ENCODE measurements at regions of chr5 and their contacts with region 1.

Region 1: GRCh38 chr5:132466433-132467286 is 23.9 kb downstream of the IRF1 start:
- DNase-seq: peak; percentile 79
- H3K4me3 ChIP-seq: no peak overlapping the region
- H3K27ac ChIP-seq: no peak overlapping the region
- H3K4me1 ChIP-seq: peaks cover 43% of the 10 kb centered on the region
- H3K27me3 ChIP-seq: no peaks in the 10 kb centered on the region
- CTCF ChIP-seq: no peak
- POLR2A ChIP-seq: no peak

Region 2: DNA sequence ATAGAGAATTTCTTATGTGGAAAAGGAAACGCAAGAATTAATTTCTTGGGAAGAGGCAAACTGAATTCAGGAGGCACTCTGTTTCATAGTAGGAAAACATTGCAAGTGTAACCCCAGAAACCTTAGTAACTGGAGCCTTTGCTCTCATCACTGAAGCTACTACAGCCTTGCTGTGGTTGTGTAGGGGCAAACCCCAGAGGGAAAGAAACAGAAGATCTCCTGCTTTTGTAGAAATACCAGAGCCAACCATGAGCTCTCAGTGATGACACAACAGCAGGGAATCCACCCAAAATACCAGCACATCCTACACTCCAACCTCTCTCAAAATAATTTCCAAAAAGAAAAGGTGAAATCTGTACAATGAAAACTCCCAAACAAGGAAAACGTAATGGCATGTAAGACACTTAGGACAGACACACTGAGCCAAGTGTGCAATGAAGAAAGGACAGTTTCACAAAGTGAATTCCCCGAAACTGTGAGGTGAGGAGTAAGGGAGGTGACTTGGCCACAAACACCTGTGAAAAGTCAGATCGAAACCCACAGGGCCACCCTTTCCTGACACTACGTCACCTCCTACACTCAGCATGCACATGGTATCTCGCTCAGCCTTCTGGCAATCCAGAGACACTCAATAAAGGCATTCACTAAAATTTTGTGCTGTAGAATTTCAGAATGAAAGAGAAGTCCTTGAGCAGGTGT is 446.7 kb before region 1 on chr5:
- CTCF ChIA-PET with region 1: no interaction called
- POLR2A ChIA-PET with region 1: no interaction called
- dilution Hi-C with region 1: no loop called
- intact Hi-C with region 1: no loop called
- DNase-seq: no peak
- H3K4me3 ChIP-seq: no peak overlapping the region
- H3K27ac ChIP-seq: no peak overlapping the region
- H3K4me1 ChIP-seq: no peaks in the 10 kb centered on the region
- H3K27me3 ChIP-seq: peaks cover 11 to 30% of the 10 kb centered on the region in 2 experiments
- CTCF ChIP-seq: no peak
- POLR2A ChIP-seq: no peak

Region 3: DNA sequence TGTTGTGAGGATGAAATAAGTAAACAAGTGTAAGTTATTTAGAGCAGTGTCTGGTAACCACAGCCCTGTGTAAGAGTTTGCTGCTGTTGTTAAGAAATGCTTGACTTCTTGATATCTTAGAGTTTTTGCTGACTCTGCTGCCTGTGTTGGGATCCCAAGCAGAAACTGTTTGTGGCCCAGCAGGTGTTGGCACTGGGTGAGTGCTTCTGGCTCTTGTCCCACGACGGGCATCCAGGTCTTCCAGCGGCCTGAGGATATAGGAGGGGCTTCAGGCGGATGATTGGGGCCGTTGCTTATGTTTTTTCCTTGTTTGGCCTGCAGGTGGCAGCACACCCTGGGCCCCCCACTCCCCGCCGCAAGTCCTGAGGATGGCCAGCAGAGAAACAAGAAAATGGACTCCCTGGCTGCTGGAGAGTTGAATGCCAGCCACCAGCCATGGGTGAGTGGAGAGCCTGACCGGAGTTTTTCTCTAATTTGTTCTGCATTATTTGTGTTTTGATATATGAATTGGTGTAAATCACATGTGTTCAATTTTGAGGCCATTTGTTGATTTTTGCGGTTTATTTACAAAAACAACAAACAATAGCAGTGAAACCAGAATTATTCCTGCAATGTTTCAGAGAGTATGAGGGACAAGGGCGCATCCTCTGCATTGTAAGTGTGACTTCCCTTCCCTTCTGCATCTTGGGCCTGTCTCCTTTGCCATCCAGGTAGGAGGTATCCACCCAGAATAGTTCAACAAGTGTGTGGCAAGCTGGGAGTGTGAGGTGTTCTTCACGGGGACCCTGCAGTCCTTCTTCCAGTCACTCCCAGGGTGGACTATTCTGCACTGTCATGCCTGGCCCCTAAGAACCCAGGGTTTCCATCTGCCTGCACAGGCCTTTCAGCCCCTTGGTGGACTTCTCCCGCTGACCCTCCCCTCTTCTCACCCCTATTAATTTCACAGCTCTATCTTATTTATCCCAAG is 46.9 kb before region 1 on chr5:
- CTCF ChIA-PET with region 1: interaction called, 23 read pairs
- POLR2A ChIA-PET with region 1: no interaction called
- dilution Hi-C with region 1: no loop called
- intact Hi-C with region 1: loop called (anchors 1 kb)
- DNase-seq: peak; percentile 90
- H3K4me3 ChIP-seq: no peak overlapping the region
- H3K27ac ChIP-seq: peak overlapping the region; percentile 6
- H3K4me1 ChIP-seq: peaks cover 41% of the 10 kb centered on the region
- H3K27me3 ChIP-seq: no peaks in the 10 kb centered on the region
- CTCF ChIP-seq: peak; percentile 77 to 83
- POLR2A ChIP-seq: no peak

Region 4: GRCh38 chr5:132426525-132427138 is 40.0 kb before region 1 on chr5:
- CTCF ChIA-PET with region 1: interaction called, 30 read pairs
- POLR2A ChIA-PET with region 1: interaction called, 3 read pairs
- dilution Hi-C with region 1: no loop called
- intact Hi-C with region 1: loop called (anchors 2 kb)
- DNase-seq: peak; percentile 80
- H3K4me3 ChIP-seq: no peak overlapping the region
- H3K27ac ChIP-seq: peak overlapping the region; percentile 62
- H3K4me1 ChIP-seq: peaks cover 31% of the 10 kb centered on the region
- H3K27me3 ChIP-seq: no peaks in the 10 kb centered on the region
- CTCF ChIP-seq: peak; percentile 53 to 54
- POLR2A ChIP-seq: no peak

Region 5: DNA sequence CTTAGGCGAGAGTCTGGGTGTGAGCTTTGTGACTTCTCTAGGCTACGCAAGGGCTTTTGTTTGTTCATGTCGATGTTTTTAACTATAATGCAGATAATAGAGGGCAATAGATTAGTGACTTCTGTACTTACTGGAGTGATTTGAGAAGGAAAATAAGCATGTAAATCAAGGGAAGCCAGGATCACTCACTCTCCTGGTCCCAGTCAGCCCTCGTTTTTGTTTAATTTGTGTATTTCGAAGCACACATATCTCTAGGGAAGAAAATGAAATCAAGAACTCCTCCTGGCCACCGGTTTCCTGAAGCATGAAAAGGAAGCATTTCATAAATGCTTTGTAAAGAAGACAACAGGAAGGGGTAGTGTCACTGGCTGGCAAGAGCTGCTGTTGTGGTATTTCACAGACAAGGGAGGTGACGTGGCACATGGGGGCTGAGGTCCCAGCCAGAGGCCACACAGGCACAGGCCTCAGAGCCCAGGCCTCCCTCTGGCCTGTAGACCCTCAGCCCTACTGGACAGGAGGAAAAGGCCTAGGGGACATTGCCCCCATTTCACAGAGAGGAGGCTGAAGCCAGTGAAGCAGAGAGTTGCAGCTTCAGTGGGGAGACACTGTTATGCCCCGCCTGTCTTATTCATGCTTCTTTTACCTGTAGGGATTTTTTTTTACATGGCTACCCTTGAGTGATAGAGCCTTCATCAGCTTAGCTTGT is 10.2 kb before region 1 on chr5:
- CTCF ChIA-PET with region 1: interaction called, 21 read pairs
- POLR2A ChIA-PET with region 1: interaction called, 3 read pairs
- dilution Hi-C with region 1: no loop called
- intact Hi-C with region 1: loop called (anchors 1 kb)
- DNase-seq: peak; percentile 78
- H3K4me3 ChIP-seq: no peak overlapping the region
- H3K27ac ChIP-seq: peak overlapping the region; percentile 49
- H3K4me1 ChIP-seq: peaks cover 22% of the 10 kb centered on the region
- H3K27me3 ChIP-seq: no peaks in the 10 kb centered on the region
- CTCF ChIP-seq: no peak
- POLR2A ChIP-seq: no peak

Region 6: DNA sequence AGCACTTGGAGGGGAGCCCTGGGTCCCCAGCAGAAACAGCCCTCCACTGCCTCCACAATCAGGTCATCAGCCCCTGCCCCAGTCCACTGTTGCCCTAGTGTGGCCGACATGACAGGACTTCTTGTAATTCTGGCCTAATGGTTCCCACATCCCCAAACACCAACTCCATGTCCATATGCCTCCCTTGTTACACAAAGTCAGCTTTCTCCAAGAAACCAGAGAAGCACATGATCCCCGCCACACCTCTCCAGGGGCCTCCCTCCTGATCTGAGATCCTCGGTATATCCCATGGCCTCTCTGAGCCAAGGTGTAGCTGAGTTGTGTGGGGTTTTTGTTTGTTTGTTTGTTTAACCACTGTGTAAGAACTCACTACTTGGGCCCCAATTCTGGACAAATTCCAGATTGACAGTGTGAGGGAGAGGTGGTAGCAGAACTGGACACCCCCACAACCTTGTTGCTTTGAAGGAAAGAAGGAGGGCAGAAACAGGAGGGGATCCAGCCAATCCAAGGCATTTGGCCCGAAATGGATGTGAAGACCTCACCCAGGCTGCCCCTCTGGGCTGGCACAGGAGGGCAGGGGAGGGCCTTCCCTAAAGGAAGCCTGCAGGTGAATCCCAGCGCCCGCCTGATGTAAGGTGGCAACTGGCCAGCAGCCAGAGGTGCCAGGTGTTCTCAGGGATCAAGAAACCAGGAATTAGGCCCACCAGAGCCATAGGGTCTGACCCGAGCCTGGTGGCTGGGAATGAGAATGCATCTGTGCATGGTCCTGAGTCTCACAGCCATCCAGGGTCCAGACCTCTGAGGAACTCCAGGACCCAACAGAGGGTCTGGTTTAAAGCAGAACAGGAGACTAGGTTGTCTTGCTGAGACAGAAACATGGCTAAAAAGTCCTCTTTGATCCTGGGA is 10.5 kb after region 1 on chr5:
- CTCF ChIA-PET with region 1: interaction called, 15 read pairs
- POLR2A ChIA-PET with region 1: interaction called, 4 read pairs
- dilution Hi-C with region 1: no loop called
- intact Hi-C with region 1: no loop called
- DNase-seq: no peak
- H3K4me3 ChIP-seq: no peak overlapping the region
- H3K27ac ChIP-seq: no peak overlapping the region
- H3K4me1 ChIP-seq: no peaks in the 10 kb centered on the region
- H3K27me3 ChIP-seq: no peaks in the 10 kb centered on the region
- CTCF ChIP-seq: no peak
- POLR2A ChIP-seq: no peak

Region 7: DNA sequence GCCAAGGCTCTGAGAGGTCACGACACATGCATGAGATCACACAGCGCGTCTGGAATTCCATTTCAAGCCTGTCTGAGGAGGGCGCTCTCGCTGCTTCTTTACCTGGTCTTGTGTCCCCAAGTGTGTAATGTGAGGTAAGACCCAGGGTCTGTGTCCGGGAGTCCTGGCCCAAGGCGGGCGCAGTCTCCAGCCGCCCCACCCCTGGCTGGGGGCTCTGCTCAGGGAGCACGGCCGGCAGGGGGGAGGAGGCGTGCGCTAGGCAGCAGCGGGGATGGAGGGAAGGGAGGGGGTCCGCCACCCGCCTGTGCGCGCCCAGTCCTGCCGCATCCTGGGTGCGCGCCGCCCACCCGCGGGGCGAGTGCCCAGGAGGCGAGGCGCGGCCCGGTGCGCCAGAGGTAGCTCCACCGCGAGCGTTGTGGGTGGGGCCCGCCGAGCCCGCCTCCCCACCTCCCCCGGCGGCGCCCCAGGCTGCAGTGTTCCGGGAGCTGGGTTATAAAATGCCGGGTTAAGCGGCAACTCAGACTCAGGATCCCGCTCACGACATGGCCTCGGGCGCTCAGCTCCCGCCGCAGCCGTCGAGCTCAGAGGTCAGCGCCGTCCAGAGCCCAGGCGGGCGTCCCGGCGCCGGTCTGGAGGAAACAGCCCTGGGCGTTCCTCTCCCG is 280.4 kb after region 1 on chr5 and contains the start of gene CCNI2:
- CTCF ChIA-PET with region 1: no interaction called
- POLR2A ChIA-PET with region 1: no interaction called
- dilution Hi-C with region 1: no loop called
- intact Hi-C with region 1: no loop called
- DNase-seq: peak; percentile 50
- H3K4me3 ChIP-seq: peak within 1 kb of the TSS; percentile 32 to 34 (median 34)
- H3K27ac ChIP-seq: no peak within 1 kb of the TSS
- H3K4me1 ChIP-seq: peaks cover 5% of the 10 kb centered on the region
- H3K27me3 ChIP-seq: peaks cover 2 to 5% of the 10 kb centered on the region in 2 experiments
- CTCF ChIP-seq: peak; percentile 28 to 38
- POLR2A ChIP-seq: no peak
- total RNA-seq, gene CCNI2: 0.53 TPM in 1 of 2 replicates, not detected in the other

Region 8: GRCh38 chr5:132771503-132771998 is 304.9 kb after region 1 on chr5:
- CTCF ChIA-PET with region 1: no interaction called
- POLR2A ChIA-PET with region 1: no interaction called
- dilution Hi-C with region 1: no loop called
- intact Hi-C with region 1: no loop called
- DNase-seq: peak; percentile 19
- H3K4me3 ChIP-seq: no peak overlapping the region
- H3K27ac ChIP-seq: peak overlapping the region; percentile 55
- H3K4me1 ChIP-seq: peaks cover 33% of the 10 kb centered on the region
- H3K27me3 ChIP-seq: no peaks in the 10 kb centered on the region
- CTCF ChIP-seq: no peak
- POLR2A ChIP-seq: no peak

Measured in endothelial cell of umbilical vein (primary cell).